Mammary epithelial cell (primary cell): ENCODE measurements at regions of chr1 and their contacts with region 1.

Region 1: GRCh38 chr1:26391450-26391849 is 18.9 kb upstream of the ZNF683 start:
- DNase-seq: peak; percentile 48
- H3K4me3 ChIP-seq: no peak overlapping the region
- H3K27ac ChIP-seq: no peak overlapping the region
- H3K4me1 ChIP-seq: peaks cover 4% of the 10 kb centered on the region
- H3K27me3 ChIP-seq: no peaks in the 10 kb centered on the region
- CTCF ChIP-seq: peak; percentile 91 to 97

Region 2: GRCh38 chr1:26102526-26102925 is 288.9 kb before region 1 on chr1:
- CTCF ChIA-PET with region 1: no interaction called
- dilution Hi-C with region 1: no loop called
- in situ Hi-C with region 1: no loop called
- intact Hi-C with region 1: loop called (anchors 1 kb)
- DNase-seq: no peak
- H3K4me3 ChIP-seq: no peak overlapping the region
- H3K27ac ChIP-seq: no peak overlapping the region
- H3K4me1 ChIP-seq: peaks cover 6% of the 10 kb centered on the region
- H3K27me3 ChIP-seq: peaks cover 2% of the 10 kb centered on the region
- CTCF ChIP-seq: no peak

Region 3: DNA sequence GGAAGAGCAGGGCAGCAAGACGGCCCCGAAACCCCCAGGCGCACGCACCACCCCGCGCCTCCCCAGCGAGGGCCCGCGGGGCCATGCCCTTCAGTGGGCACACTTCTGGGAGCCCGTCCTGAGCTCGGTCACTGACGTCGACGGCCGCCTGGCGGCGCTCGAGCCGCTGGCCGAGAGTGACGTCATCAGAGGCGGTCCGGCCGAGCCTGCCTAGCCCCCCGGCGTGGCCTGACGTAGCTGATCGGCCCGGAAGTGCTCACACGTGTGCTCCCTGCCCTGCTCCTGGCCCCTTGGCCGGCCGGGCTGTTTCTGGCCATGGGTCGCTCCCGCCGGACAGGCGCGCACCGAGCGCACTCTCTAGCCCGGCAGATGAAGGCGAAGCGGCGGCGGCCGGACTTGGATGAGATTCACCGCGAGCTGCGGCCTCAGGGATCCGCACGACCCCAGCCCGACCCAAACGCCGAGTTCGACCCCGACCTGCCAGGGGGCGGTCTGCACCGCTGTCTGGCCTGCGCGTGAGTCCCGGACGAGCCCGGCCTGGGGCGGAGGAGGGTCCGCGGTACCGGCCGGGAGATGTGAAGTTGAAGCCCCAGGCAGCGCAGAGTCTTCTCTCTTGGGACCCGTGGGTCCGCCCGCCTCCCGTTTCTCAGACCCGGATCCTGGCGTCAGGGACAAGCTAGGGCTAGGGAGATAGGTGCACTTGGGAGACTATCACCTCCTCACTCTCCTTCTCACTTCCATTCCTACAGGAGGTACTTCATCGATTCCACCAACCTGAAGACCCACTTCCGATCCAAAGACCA is 221.6 kb before region 1 on chr1 and contains the start of gene ZNF593:
- CTCF ChIA-PET with region 1: interaction called, 7 read pairs
- dilution Hi-C with region 1: no loop called
- in situ Hi-C with region 1: loop called in 1 of 2 experiments (anchors 25 kb)
- intact Hi-C with region 1: loop called (anchors 1 kb)
- DNase-seq: peak; percentile 81
- H3K4me3 ChIP-seq: peak within 1 kb of the TSS; percentile 73 to 84 (median 76)
- H3K27ac ChIP-seq: peak within 1 kb of the TSS; percentile 75
- H3K4me1 ChIP-seq: peaks cover 9% of the 10 kb centered on the region
- H3K27me3 ChIP-seq: no peaks in the 10 kb centered on the region
- CTCF ChIP-seq: peak; percentile 83 to 94
- total RNA-seq, gene ZNF593: 31.5 to 41.5 TPM

Region 4: DNA sequence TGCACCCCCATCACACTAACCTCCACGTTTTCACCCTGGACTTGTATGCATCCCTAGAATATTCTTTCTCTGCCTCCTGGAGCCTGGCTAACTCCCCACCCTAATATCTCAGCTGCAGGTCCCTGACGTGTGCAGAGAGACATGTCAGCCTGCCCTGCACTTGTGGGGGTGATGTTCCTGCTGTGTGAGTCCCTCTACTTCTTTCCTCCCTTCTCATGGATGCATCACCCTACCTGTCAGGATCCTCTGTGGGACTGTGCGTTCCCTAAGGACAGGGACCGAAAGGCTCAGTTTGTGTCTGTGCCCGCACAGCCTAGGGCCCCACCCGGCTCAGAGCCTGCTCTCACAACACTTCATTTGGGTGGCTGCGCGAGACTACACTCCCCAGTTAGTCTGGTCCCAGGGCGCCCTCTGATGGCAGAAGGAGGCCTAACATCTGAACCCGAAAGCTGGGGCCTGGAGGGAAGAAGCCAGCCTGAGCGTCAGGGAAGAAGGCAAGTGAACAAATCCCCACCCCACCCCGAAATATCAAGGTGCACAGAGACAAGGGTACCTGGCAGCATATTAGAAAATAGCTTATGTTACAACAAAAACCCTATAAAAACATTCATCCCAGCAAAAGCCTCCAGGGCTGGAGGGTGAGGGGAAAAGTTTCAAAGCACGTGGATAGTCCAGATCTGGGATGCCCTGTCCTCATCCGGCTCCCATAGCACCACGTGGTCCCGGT is 70.0 kb before region 1 on chr1:
- CTCF ChIA-PET with region 1: no interaction called
- dilution Hi-C with region 1: no loop called
- in situ Hi-C with region 1: no loop called
- intact Hi-C with region 1: loop called (anchors 1 kb)
- DNase-seq: peak; percentile 76
- H3K4me3 ChIP-seq: no peak overlapping the region
- H3K27ac ChIP-seq: no peak overlapping the region
- H3K4me1 ChIP-seq: peaks cover 9% of the 10 kb centered on the region
- H3K27me3 ChIP-seq: no peaks in the 10 kb centered on the region
- CTCF ChIP-seq: peak; percentile 78 to 91

Region 5: GRCh38 chr1:26358411-26359384 is 32.8 kb before region 1 on chr1:
- CTCF ChIA-PET with region 1: no interaction called
- dilution Hi-C with region 1: loop called (anchors 5 kb)
- in situ Hi-C with region 1: no loop called
- intact Hi-C with region 1: no loop called
- DNase-seq: peak; percentile 93
- H3K4me3 ChIP-seq: no peak overlapping the region
- H3K27ac ChIP-seq: no peak overlapping the region
- H3K4me1 ChIP-seq: peaks cover 42% of the 10 kb centered on the region
- H3K27me3 ChIP-seq: no peaks in the 10 kb centered on the region
- CTCF ChIP-seq: no peak